ENCODE measurements at regions of chr5 and their contacts with region 1.

Region 1: GRCh38 chr5:175534070-175534932 is 55.9 kb downstream of the SFXN1 start:
- DNase-seq: peak; percentile 94
- ATAC-seq: peak; percentile 95

Region 2: GRCh38 chr5:175464074-175464941 is 70.0 kb before region 1 on chr5:
- intact Hi-C with region 1: no loop called
- DNase-seq: no peak
- ATAC-seq: no peak

Region 3: GRCh38 chr5:175718401-175719108 is 184.3 kb after region 1 on chr5:
- intact Hi-C with region 1: loop called (anchors 2 kb)
- DNase-seq: peak; percentile 85
- ATAC-seq: no peak